Panc1 (cell line): ENCODE measurements at regions of chr18 and their contacts with region 1.

Region 1: GRCh38 chr18:58863539-58864145 is 1.0 kb upstream of the ZNF532 start:
- DNase-seq: no peak
- ATAC-seq: peak; percentile 62
- H3K4me3 ChIP-seq: peak overlapping the region; percentile 28 to 39
- H3K27ac ChIP-seq: 0 out of 2 replicates have a peak overlapping the region, but pooled peaks have one; percentile 17
- H3K4me1 ChIP-seq: peaks cover 62% of the 10 kb centered on the region
- H3K27me3 ChIP-seq: no peaks in the 10 kb centered on the region
- CTCF ChIP-seq: no peak

Region 2: GRCh38 chr18:58884680-58885079 is 21.0 kb after region 1 on chr18:
- CTCF ChIA-PET with region 1: interaction called, 11 read pairs
- POLR2A ChIA-PET with region 1: interaction called, 6 read pairs
- in situ Hi-C with region 1: no loop called
- intact Hi-C with region 1: no loop called
- DNase-seq: no peak
- ATAC-seq: no peak
- H3K4me3 ChIP-seq: no peak overlapping the region
- H3K27ac ChIP-seq: no peak overlapping the region; the same call in 1 of the 2 replicates
- H3K4me1 ChIP-seq: peaks cover 10% of the 10 kb centered on the region
- H3K27me3 ChIP-seq: no peaks in the 10 kb centered on the region
- CTCF ChIP-seq: no peak